ENCODE measurements at regions of chr19 and their contacts with region 1.

Region 1: DNA sequence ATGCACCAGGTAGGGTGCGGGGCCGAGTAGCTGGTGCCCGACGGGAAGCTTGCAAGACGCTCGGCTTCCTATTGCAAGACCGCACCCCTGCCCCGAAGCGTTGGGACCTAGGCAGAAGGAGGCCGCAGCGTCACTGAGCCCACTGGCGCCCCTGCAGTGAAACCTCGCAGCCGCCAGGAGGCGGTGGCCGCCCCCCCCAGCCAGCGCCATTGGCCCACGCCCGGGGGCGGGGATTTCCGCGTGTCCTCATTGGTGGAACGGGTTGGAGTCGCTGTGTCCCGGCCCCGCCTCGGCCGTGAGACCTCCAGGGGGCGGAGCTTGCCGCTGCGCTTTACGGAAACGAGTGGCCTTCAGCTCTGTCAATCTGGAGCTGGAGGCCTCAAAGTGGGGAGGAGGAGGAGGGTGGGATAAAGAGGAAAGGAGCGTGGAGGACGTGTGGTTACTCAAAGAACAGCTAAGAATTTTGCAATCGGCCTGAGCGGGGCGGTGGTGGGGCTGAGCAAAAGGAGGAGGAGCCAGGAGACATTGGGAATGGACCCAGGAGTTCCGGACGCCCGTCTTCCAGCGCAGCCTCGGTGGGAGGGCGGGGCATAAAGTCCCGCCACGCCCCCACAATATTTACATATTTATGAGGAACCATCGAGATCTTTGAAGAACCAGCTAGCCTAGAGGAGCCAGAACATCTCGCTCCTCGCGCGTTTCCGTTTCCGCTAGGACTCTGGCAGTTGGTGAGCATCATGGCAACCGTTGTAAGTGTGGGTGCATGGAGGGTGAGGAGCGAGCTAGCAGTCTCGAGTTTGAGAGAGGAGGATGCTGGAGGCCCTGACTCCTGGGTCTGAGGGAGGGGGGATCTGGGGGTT is at the starts of genes GYS1 and RUVBL2:
- DNase-seq: peak; percentile 99
- ATAC-seq: peak; percentile 93
- H3K4me3 Mint-ChIP-seq: peak within 1 kb of the TSS; percentile 89
- H3K27ac Mint-ChIP-seq: peak within 1 kb of the TSS; percentile 97
- H3K4me1 Mint-ChIP-seq: peaks cover 41% of the 10 kb centered on the region
- H3K27me3 Mint-ChIP-seq: no peaks in the 10 kb centered on the region
- total RNA-seq, gene GYS1: 44.0 to 65.5 TPM
- total RNA-seq, gene RUVBL2: 124 to 125 TPM

Region 2: GRCh38 chr19:48872182-48872883 is 121.1 kb before region 1 on chr19 and contains the start of gene PPP1R15A:
- CTCF ChIA-PET with region 1: interaction called, 15 read pairs
- DNase-seq: peak; percentile 99
- ATAC-seq: peak; percentile 35
- H3K4me3 Mint-ChIP-seq: peak within 1 kb of the TSS; percentile 98
- H3K27ac Mint-ChIP-seq: peak within 1 kb of the TSS; percentile 100
- H3K4me1 Mint-ChIP-seq: peaks cover 39% of the 10 kb centered on the region
- H3K27me3 Mint-ChIP-seq: peaks cover 5% of the 10 kb centered on the region
- total RNA-seq, gene PPP1R15A: 32.1 to 89.7 TPM

Region 3: GRCh38 chr19:48970923-48971395 is 22.4 kb before region 1 on chr19:
- CTCF ChIA-PET with region 1: interaction called, 45 read pairs
- DNase-seq: peak; percentile 87
- ATAC-seq: peak; percentile 52
- H3K4me3 Mint-ChIP-seq: no peak overlapping the region
- H3K27ac Mint-ChIP-seq: no peak overlapping the region
- H3K4me1 Mint-ChIP-seq: peaks cover 31% of the 10 kb centered on the region
- H3K27me3 Mint-ChIP-seq: no peaks in the 10 kb centered on the region

Region 4: DNA sequence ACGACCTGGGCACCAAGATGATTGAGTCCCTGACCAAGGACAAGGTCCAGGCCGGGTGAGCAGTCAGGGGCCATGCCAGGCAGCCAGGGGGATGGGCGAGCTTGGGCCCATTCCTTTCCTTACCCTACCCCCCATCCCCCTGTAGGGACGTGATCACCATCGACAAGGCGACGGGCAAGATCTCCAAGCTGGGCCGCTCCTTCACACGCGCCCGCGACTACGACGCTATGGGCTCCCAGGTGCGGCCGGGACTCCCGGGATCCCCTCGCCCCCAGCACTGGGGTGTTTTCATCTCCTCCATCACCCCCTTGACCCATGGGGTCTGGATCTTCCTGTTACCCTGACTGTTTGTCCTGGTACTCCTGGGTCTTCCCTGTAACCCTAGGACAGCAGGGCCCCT is 16.4 kb after region 1 on chr19:
- CTCF ChIA-PET with region 1: interaction called, 25 read pairs
- DNase-seq: no peak
- ATAC-seq: no peak
- H3K4me3 Mint-ChIP-seq: no peak overlapping the region
- H3K27ac Mint-ChIP-seq: no peak overlapping the region
- H3K4me1 Mint-ChIP-seq: no peaks in the 10 kb centered on the region
- H3K27me3 Mint-ChIP-seq: no peaks in the 10 kb centered on the region

Region 5: GRCh38 chr19:49056010-49056901 is 62.9 kb after region 1 on chr19:
- CTCF ChIA-PET with region 1: interaction called, 10 read pairs
- DNase-seq: peak; percentile 73
- ATAC-seq: peak; percentile 86
- H3K4me3 Mint-ChIP-seq: peak overlapping the region; percentile 52
- H3K27ac Mint-ChIP-seq: no peak overlapping the region
- H3K4me1 Mint-ChIP-seq: peaks cover 22% of the 10 kb centered on the region
- H3K27me3 Mint-ChIP-seq: peaks cover 58% of the 10 kb centered on the region

Region 6: GRCh38 chr19:49127674-49128544 is 134.5 kb after region 1 on chr19:
- CTCF ChIA-PET with region 1: interaction called, 15 read pairs
- DNase-seq: peak; percentile 97
- ATAC-seq: peak; percentile 95
- H3K4me3 Mint-ChIP-seq: peak overlapping the region; percentile 71
- H3K27ac Mint-ChIP-seq: peak overlapping the region; percentile 79
- H3K4me1 Mint-ChIP-seq: peaks cover 9% of the 10 kb centered on the region
- H3K27me3 Mint-ChIP-seq: peaks cover 3% of the 10 kb centered on the region

Region 7: DNA sequence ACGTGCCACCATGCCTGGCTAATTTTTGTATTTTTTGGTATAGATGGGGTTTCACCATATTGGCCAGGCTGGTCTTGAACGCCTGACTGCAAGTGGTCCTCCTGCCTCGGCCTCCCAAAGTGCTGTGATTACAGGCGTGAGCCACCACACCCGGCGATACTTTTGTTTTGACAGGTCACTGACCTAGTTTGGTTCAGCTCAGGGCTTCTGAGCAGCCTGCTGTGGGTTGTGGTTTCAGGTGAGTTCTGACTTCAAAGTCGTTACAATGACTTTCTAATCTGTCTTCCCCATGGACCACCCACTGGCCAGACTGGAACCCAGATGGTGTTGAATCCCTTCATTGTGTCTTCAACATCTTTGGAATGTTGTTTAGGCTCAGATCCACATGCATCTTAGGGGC is 238.0 kb after region 1 on chr19:
- CTCF ChIA-PET with region 1: no interaction called
- DNase-seq: peak; percentile 68
- ATAC-seq: peak; percentile 39
- H3K4me3 Mint-ChIP-seq: no peak overlapping the region
- H3K27ac Mint-ChIP-seq: no peak overlapping the region
- H3K4me1 Mint-ChIP-seq: peaks cover 11% of the 10 kb centered on the region
- H3K27me3 Mint-ChIP-seq: peaks cover 25% of the 10 kb centered on the region